ENCODE measurements at regions of chr1 and their contacts with region 1.

Region 1: DNA sequence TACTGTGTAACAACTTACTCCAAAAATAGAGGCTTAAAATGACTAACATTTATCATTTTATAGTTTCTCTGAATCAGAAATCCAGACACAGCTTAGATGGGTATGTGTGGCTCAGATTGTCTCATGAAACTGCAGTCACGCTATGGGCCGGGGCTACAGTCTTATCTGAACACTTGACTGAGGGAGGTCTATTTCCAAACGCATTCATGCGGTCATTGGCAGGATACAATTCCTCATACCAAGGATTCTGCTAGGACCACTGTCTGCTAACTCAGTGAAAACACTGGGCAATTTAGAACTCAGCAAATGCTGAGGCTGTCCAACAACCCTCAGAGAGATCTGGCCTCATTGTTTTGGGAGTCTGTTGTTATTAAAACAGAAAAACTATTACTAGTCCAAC is 178.6 kb downstream of the TBX15 start:
- DNase-seq: no peak

Region 2: DNA sequence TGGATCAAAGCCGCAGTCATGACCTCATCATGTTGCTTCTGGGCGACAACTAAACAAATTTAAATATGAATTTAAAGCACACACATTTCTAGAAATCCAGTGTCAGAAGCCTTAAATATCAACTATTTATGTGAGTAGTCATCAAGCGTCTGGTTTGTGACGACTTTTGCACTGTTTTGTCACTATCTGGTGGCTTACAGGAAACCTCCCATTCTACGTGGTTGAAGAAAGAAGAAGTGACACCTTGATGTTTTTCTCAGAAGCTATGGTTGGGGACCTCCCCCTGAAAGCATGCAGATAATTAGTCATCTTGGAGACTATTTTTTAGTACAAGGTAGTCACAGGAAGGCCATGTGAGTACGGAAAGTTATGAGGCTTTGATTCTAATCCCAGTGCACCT is 1145.3 kb before region 1 on chr1:
- intact Hi-C with region 1: no loop called
- DNase-seq: no peak

Region 3: GRCh38 chr1:119475866-119476439 is 666.4 kb after region 1 on chr1:
- intact Hi-C with region 1: loop called in 1 of 2 experiments (anchors 5 kb)
- DNase-seq: no peak

Measured in posterior vena cava (tissue), 2 donors.